Posterior vena cava (tissue), 2 donors: ENCODE measurements at regions of chr17 and their contacts with region 1.

Region 1: GRCh38 chr17:45688353-45688752 is 95.8 kb upstream of the CRHR1 start:
- DNase-seq: no peak

Region 2: DNA sequence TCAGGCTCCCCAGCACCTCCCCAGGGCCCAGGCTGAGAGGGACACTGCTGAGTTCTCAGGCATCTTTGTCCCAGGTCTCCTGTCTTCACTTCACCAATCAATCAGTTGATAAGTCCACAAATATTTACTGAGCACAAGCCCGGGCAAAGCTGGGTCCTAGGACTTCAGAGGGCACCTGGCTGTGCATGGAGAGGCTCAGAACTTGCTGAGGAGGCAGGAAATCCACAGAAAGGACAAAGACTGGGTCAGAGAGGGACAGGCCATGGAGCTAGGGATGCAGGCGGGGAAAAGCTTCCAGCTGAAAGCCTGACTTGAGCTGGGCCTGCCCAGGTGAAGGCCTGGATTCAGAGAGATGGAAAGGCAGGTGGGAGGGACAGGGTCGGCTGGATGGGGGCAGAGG is 687.0 kb before region 1 on chr17:
- intact Hi-C with region 1: loop called in 1 of 2 experiments (anchors 5 kb)
- DNase-seq: no peak